ENCODE measurements at regions of chr11 and their contacts with region 1.

Region 1: GRCh38 chr11:118610804-118611795 is 3.7 kb downstream of the PHLDB1 start:
- DNase-seq: peak; percentile 78
- H3K4me3 ChIP-seq: peak overlapping the region; percentile 39 to 60 (median 59)
- H3K27ac ChIP-seq: peak overlapping the region; percentile 80
- H3K4me1 ChIP-seq: peaks cover 51% of the 10 kb centered on the region
- H3K27me3 ChIP-seq: no peaks in the 10 kb centered on the region
- CTCF ChIP-seq: peak; percentile 82 to 98
- POLR2A ChIP-seq: no peak

Region 2: DNA sequence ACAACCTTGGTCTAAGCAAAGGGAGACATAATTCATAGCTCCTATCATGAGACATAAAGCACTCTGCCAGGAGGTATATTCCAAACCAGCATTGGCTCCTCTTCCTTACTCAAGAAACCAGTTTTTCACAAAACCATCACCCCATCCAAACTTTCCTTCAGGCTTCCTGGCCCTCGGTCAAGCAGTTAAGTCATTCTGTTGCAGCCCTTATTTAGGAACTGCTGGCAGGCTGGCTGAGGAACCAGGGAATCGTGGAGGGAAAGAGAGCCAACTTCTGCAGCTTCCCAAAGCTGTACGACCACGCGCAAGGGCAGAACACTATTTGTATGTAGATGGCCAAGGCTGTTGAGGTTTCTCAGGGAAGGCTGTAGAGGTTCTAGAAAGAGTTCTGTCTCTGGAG is 46.0 kb before region 1 on chr11:
- CTCF ChIA-PET with region 1: no interaction called
- POLR2A ChIA-PET with region 1: no interaction called
- dilution Hi-C with region 1: no loop called
- intact Hi-C with region 1: no loop called
- DNase-seq: no peak
- H3K4me3 ChIP-seq: no peak overlapping the region
- H3K27ac ChIP-seq: no peak overlapping the region
- H3K4me1 ChIP-seq: peaks cover 5% of the 10 kb centered on the region
- H3K27me3 ChIP-seq: no peaks in the 10 kb centered on the region
- CTCF ChIP-seq: no peak
- POLR2A ChIP-seq: no peak

Region 3: GRCh38 chr11:118581057-118581456 is 30.0 kb before region 1 on chr11:
- CTCF ChIA-PET with region 1: no interaction called
- POLR2A ChIA-PET with region 1: no interaction called
- dilution Hi-C with region 1: no loop called
- intact Hi-C with region 1: loop called (anchors 2 kb)
- DNase-seq: peak; percentile 95
- H3K4me3 ChIP-seq: peak overlapping the region in 1 of 3 experiments; percentile 13
- H3K27ac ChIP-seq: peak overlapping the region; percentile 66
- H3K4me1 ChIP-seq: peaks cover 23% of the 10 kb centered on the region
- H3K27me3 ChIP-seq: no peaks in the 10 kb centered on the region
- CTCF ChIP-seq: no peak
- POLR2A ChIP-seq: peak; percentile 60

Region 4: GRCh38 chr11:118621071-118621783 is 10.1 kb after region 1 on chr11:
- CTCF ChIA-PET with region 1: interaction called, 138 read pairs
- POLR2A ChIA-PET with region 1: interaction called, 29 read pairs
- dilution Hi-C with region 1: no loop called
- intact Hi-C with region 1: loop called (anchors 1 kb)
- DNase-seq: peak; percentile 93
- H3K4me3 ChIP-seq: peak overlapping the region; percentile 59 to 74 (median 70)
- H3K27ac ChIP-seq: peak overlapping the region; percentile 96
- H3K4me1 ChIP-seq: peaks cover 63% of the 10 kb centered on the region
- H3K27me3 ChIP-seq: no peaks in the 10 kb centered on the region
- CTCF ChIP-seq: no peak
- POLR2A ChIP-seq: peak; percentile 61

Region 5: GRCh38 chr11:118659314-118659952 is 48.3 kb after region 1 on chr11:
- CTCF ChIA-PET with region 1: interaction called, 32 read pairs
- POLR2A ChIA-PET with region 1: no interaction called
- dilution Hi-C with region 1: no loop called
- intact Hi-C with region 1: loop called (anchors 1 kb)
- DNase-seq: peak; percentile 86
- H3K4me3 ChIP-seq: no peak overlapping the region
- H3K27ac ChIP-seq: peak overlapping the region; percentile 18
- H3K4me1 ChIP-seq: peaks cover 6% of the 10 kb centered on the region
- H3K27me3 ChIP-seq: peaks cover 0 to 2% of the 10 kb centered on the region in 2 experiments
- CTCF ChIP-seq: peak; percentile 97 to 98
- POLR2A ChIP-seq: peak; percentile 65

Region 6: GRCh38 chr11:119134389-119134978 is 523.4 kb after region 1 on chr11:
- CTCF ChIA-PET with region 1: no interaction called
- POLR2A ChIA-PET with region 1: no interaction called
- dilution Hi-C with region 1: no loop called
- intact Hi-C with region 1: no loop called
- DNase-seq: no peak
- H3K4me3 ChIP-seq: no peak overlapping the region
- H3K27ac ChIP-seq: no peak overlapping the region
- H3K4me1 ChIP-seq: peaks cover 7% of the 10 kb centered on the region
- H3K27me3 ChIP-seq: no peaks in the 10 kb centered on the region
- CTCF ChIP-seq: peak; percentile 58 to 77
- POLR2A ChIP-seq: no peak

Region 7: DNA sequence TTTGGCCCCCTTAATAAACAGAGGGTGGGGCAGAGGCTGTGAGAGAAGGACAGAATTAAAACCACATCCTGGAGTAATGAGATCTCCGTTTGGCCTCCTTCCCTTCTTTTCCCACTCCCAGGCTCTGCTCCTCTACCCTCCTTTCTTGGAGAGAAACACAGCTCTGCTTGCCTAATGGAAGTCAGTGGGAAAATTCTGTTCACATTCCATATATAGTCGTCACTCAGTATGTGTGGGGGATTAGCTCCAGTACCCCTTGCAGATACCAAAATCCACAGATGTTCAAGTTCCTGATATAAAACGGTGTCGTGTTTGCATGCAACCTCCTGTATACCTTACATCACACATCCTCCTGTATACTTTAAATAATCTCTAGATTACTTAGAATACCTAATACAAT is 849.5 kb after region 1 on chr11:
- CTCF ChIA-PET with region 1: no interaction called
- POLR2A ChIA-PET with region 1: no interaction called
- dilution Hi-C with region 1: no loop called
- intact Hi-C with region 1: no loop called
- DNase-seq: no peak
- H3K4me3 ChIP-seq: no peak overlapping the region
- H3K27ac ChIP-seq: no peak overlapping the region
- H3K4me1 ChIP-seq: no peaks in the 10 kb centered on the region
- H3K27me3 ChIP-seq: peaks cover 0 to 2% of the 10 kb centered on the region in 2 experiments
- CTCF ChIP-seq: no peak
- POLR2A ChIP-seq: no peak

Measured in endothelial cell of umbilical vein (primary cell).